ENCODE measurements at regions of chr12 and their contacts with region 1.

Region 1: DNA sequence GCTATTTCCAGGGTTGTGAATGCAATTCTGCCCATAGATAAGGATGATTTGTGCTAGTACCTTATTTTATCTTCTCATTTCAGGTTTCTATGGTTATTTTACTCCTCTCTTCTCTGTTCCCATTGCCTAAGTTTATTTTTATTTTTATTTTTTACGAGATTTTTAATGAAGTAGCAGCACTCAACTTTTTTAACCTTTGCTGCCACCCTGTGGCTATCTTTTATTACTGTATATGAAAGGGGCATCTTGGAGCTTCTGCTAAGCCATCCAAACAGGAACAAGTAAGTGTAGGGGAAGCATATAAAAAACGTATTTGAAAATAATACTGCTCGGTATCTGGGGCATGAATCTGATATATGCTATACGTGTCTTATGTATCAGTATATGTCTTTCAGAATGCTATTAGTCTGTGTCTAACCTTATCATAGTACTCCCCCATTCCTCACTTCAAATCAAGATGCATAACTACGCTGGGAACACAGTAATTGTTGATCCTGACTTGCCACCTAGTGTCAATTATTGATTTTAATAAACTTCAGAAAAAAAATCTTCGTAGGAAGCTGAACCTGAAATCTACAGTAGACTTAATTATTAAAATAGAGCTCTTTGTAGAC is 60.3 kb downstream of the KLRG1 start:
- DNase-seq: no peak
- H3K4me3 ChIP-seq: no peak overlapping the region
- H3K27ac ChIP-seq: no peak overlapping the region
- H3K4me1 ChIP-seq: no peaks in the 10 kb centered on the region
- H3K27me3 ChIP-seq: no peaks in the 10 kb centered on the region
- CTCF ChIP-seq: peak in 2 of 3 experiments; percentile 35; a peak in 2 of 4 replicates
- EP300 ChIP-seq: no peak
- POLR2A ChIP-seq: no peak
- RAD21 ChIP-seq: peak; percentile 62 to 65

Region 2: GRCh38 chr12:8675591-8676036 is 374.0 kb before region 1 on chr12:
- CTCF ChIA-PET with region 1: interaction called, 15 read pairs
- POLR2A ChIA-PET with region 1: no interaction called
- DNase-seq: no peak
- H3K4me3 ChIP-seq: no peak overlapping the region
- H3K27ac ChIP-seq: no peak overlapping the region
- H3K4me1 ChIP-seq: peaks cover 0 to 4% (median 0%) of the 10 kb centered on the region in 4 experiments; a peak in 1 of 7 replicates
- H3K27me3 ChIP-seq: no peaks in the 10 kb centered on the region
- CTCF ChIP-seq: no peak
- EP300 ChIP-seq: no peak
- POLR2A ChIP-seq: no peak
- RAD21 ChIP-seq: no peak

Region 3: GRCh38 chr12:8949342-8950220 is 100.0 kb before region 1 on chr12 and contains the start of gene M6PR:
- CTCF ChIA-PET with region 1: interaction called, 35 read pairs
- POLR2A ChIA-PET with region 1: interaction called, 25 read pairs
- DNase-seq: peak; percentile 79 to 94
- H3K4me3 ChIP-seq: peak within 1 kb of the TSS; percentile 61 to 93 (median 90)
- H3K27ac ChIP-seq: peak within 1 kb of the TSS; percentile 97
- H3K4me1 ChIP-seq: no peaks in the 10 kb centered on the region; a peak in 1 of 7 replicates
- H3K27me3 ChIP-seq: no peaks in the 10 kb centered on the region
- CTCF ChIP-seq: peak; percentile 66 to 68 (median 66)
- EP300 ChIP-seq: 0 out of 3 replicates have a peak, but pooled peaks of 1 of the 2 experiments have one; percentile 6
- POLR2A ChIP-seq: peak; percentile 54 to 84
- RAD21 ChIP-seq: peak; percentile 64 to 75
- total RNA-seq, gene M6PR: 106 and 115 TPM in 2 replicates

Region 4: DNA sequence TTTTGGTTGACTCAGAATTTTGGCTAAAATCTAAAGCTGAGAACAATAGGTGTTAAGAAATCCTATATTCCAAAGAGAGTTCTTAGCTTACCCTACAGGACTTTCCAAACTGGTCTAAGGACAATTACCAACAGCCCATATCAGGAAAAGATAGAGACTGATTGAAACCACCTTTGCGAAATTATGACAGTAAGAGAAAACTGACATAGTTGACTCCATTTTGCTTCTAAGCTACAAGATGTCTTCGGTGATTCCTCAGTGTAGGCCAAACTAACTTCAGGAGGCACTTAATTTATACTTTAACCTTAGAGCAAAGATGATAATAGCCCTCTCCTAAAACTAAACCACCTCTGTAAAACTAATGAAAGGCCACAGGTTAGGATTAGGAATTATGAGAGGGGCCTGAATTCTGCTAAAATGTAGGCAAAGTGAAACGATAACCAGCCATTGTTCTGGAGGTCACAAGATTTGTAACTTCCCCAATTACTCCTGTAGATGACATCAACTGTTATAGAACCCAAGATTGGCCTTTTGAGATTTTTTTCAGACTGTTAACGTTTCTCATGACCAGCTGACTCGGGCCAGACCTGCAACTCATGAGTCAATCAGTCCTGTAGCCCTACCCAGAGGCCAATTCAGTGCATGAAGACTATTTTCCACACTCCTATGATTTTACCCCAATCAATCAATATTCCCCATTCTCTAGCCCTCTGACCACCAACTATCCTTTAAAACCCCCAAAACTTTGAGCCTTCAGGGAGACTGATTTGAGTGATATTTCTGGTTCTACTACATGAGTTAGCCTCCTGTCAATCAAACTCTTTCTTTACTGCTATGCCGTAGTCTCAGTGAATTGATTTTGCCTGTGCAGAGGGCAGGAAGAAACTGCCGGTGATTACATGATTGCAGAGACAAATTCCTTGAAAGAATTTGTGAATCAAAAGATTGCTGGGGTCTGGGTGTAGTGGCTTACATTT is 17.1 kb before region 1 on chr12:
- CTCF ChIA-PET with region 1: interaction called, 58 read pairs
- POLR2A ChIA-PET with region 1: no interaction called
- DNase-seq: no peak
- H3K4me3 ChIP-seq: no peak overlapping the region
- H3K27ac ChIP-seq: no peak overlapping the region
- H3K4me1 ChIP-seq: no peaks in the 10 kb centered on the region
- H3K27me3 ChIP-seq: no peaks in the 10 kb centered on the region
- CTCF ChIP-seq: no peak
- EP300 ChIP-seq: no peak
- POLR2A ChIP-seq: no peak
- RAD21 ChIP-seq: no peak

Region 5: GRCh38 chr12:9039397-9039977 is 10.1 kb before region 1 on chr12:
- CTCF ChIA-PET with region 1: interaction called, 58 read pairs
- POLR2A ChIA-PET with region 1: no interaction called
- DNase-seq: no peak
- H3K4me3 ChIP-seq: no peak overlapping the region
- H3K27ac ChIP-seq: no peak overlapping the region
- H3K4me1 ChIP-seq: no peaks in the 10 kb centered on the region
- H3K27me3 ChIP-seq: no peaks in the 10 kb centered on the region
- CTCF ChIP-seq: peak in 2 of 3 experiments; percentile 52 to 74; a peak in 2 of 4 replicates
- EP300 ChIP-seq: no peak
- POLR2A ChIP-seq: no peak
- RAD21 ChIP-seq: peak; percentile 79

Region 6: GRCh38 chr12:9064201-9064814 is 14.7 kb after region 1 on chr12:
- CTCF ChIA-PET with region 1: interaction called, 25 read pairs
- POLR2A ChIA-PET with region 1: interaction called, 20 read pairs
- DNase-seq: peak in 1 of 2 experiments; percentile 9
- H3K4me3 ChIP-seq: peak overlapping the region; percentile 52 to 83 (median 81)
- H3K27ac ChIP-seq: peak overlapping the region; percentile 80; the same call in 1 of the 2 replicates
- H3K4me1 ChIP-seq: peaks cover 0 to 9% (median 6%) of the 10 kb centered on the region in 4 experiments; a peak in 5 of 7 replicates
- H3K27me3 ChIP-seq: no peaks in the 10 kb centered on the region
- CTCF ChIP-seq: peak; percentile 43 to 54 (median 48)
- EP300 ChIP-seq: no peak
- POLR2A ChIP-seq: no peak; a peak in 1 of 3 replicates
- RAD21 ChIP-seq: peak; percentile 56 to 72

Region 7: GRCh38 chr12:9319044-9319841 is 269.6 kb after region 1 on chr12:
- CTCF ChIA-PET with region 1: no interaction called
- POLR2A ChIA-PET with region 1: no interaction called
- DNase-seq: no peak
- H3K4me3 ChIP-seq: no peak overlapping the region
- H3K27ac ChIP-seq: no peak overlapping the region
- H3K4me1 ChIP-seq: no peaks in the 10 kb centered on the region
- H3K27me3 ChIP-seq: no peaks in the 10 kb centered on the region
- CTCF ChIP-seq: peak in 2 of 3 experiments; percentile 18 to 34; a peak in 2 of 4 replicates
- EP300 ChIP-seq: no peak
- POLR2A ChIP-seq: no peak
- RAD21 ChIP-seq: 0 out of 4 replicates have a peak, but pooled peaks of 1 of the 2 experiments have one; percentile 16